Mammary epithelial cell (primary cell): ENCODE measurements at regions of chrX and their contacts with region 1.

Region 1: DNA sequence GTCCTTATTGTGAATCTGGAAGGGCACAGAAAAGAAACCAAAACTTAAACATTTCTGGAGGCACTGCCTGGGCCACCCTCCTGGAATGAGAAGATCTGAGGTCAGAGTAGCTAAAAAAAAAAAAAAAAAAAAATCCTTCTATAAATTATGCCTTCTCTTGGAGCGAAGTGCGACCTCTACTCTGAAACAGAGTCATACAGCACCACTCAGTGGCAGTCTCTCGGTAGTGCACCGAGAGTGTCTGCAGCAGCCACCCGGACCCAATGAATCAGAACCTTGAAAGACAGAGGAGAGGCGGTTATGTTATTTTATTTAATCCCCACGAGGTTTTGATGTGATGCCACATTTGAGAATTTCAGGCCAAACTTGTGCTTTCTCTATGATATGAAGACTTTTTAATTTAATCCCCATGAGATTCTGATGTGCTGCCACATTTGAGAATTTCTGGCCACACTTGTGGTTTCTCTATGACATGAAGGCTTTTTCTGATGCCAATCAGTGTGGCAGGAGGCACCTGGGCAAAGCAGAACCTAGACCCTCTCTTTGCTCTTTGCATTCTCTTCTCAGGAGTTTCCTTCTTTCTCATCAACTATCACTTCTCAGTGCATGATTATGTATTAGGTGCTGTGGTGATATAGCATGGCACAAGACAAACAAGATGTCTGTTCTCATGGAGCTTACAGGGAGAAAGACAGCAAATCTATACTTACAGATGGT is 5.6 kb upstream of the CT47C1 start:
- DNase-seq: peak; percentile 27
- H3K4me3 ChIP-seq: no peak overlapping the region
- H3K27ac ChIP-seq: no peak overlapping the region
- H3K4me1 ChIP-seq: no peaks in the 10 kb centered on the region
- H3K27me3 ChIP-seq: no peaks in the 10 kb centered on the region
- CTCF ChIP-seq: peak; percentile 59 to 68

Region 2: DNA sequence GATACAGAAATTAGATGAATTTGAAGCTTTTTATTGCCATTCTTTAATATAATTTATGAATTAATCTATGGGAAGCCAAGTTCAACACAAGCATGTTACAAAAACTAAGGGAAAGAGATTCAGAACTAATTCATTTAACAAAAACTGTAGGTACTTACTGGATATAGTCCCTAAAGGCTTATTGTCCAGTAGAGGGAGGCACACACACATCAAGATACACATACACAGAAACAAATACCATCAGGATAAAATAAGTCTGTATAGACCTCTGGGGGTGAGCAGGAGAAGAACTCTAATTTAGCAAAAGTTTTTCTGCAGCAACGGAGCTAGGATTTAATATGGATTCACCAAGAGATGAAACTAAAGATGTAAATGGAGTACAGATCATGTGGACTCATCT is 422.8 kb before region 1 on chrX:
- CTCF ChIA-PET with region 1: no interaction called
- dilution Hi-C with region 1: no loop called
- in situ Hi-C with region 1: no loop called
- intact Hi-C with region 1: loop called (anchors 5 kb)
- DNase-seq: peak; percentile 23
- H3K4me3 ChIP-seq: no peak overlapping the region
- H3K27ac ChIP-seq: no peak overlapping the region
- H3K4me1 ChIP-seq: no peaks in the 10 kb centered on the region
- H3K27me3 ChIP-seq: no peaks in the 10 kb centered on the region
- CTCF ChIP-seq: peak; percentile 21 to 57

Region 3: DNA sequence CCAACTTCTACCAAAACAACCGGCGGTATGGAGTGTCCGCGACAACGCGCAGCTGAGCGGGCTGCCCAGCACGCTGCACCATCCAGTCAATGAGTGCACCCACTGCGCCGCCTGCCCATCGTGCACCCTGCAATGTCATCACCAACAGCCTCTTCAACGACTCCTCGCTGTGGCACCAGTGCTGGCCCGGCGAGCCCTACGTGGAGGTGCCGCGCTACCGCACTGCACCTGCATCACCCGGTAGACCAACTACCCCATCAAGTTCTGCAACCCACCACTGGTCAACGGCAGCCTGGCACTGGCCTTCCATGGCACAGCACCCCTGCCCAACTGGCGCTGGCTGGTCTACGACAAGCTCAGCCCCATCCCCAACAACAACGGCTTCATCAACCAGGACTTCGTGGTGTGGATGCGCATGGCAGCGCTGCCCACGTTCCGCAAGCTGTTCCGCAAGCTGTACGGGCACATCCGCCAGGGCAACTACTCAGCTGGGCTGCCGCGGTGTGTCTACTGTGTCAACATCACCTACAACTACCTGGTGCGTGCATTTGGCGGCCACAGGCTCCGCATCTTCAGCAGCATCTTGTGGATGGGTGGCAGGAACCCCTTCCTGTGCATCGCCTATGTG is 296.9 kb before region 1 on chrX:
- CTCF ChIA-PET with region 1: no interaction called
- dilution Hi-C with region 1: no loop called
- in situ Hi-C with region 1: no loop called
- intact Hi-C with region 1: no loop called
- DNase-seq: no peak
- H3K4me3 ChIP-seq: no peak overlapping the region
- H3K27ac ChIP-seq: no peak overlapping the region
- H3K4me1 ChIP-seq: no peaks in the 10 kb centered on the region
- H3K27me3 ChIP-seq: no peaks in the 10 kb centered on the region
- CTCF ChIP-seq: no peak

Region 4: DNA sequence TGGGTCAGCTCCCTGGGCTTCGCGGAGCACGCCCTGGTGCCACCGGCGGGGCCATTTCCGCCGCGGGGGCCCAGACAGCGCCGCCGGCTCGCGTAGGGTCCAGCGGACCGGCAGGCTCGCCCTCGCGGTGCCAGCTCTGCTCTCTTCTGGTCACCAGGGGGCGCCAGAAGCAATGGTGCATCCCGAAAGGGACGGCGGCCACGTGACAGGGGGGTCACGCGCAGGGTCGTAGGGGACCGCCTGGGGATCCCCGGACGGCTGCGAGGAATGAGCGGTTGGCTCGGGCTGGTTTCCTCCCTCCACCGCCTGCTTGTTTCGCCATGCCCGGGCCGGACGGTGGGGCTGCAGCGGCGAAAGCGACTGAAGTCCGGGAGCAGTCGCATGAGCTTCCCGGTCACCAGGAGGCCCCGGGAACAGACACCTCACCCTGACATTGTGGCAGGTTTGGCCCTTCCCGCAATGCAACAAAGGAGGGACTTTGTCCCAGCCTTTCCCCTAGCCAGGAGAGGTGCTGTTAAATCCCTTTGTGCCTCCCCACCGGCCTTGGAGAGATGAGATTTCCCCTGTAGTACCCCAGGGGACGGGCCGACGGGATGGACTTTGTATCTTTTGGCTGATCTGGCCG is 227.7 kb before region 1 on chrX:
- CTCF ChIA-PET with region 1: interaction called, 8 read pairs
- dilution Hi-C with region 1: no loop called
- in situ Hi-C with region 1: no loop called
- intact Hi-C with region 1: loop called (anchors 2 kb)
- DNase-seq: peak; percentile 26
- H3K4me3 ChIP-seq: peak overlapping the region; percentile 21 to 50 (median 29)
- H3K27ac ChIP-seq: no peak overlapping the region
- H3K4me1 ChIP-seq: no peaks in the 10 kb centered on the region
- H3K27me3 ChIP-seq: no peaks in the 10 kb centered on the region
- CTCF ChIP-seq: peak; percentile 22 to 59

Region 5: DNA sequence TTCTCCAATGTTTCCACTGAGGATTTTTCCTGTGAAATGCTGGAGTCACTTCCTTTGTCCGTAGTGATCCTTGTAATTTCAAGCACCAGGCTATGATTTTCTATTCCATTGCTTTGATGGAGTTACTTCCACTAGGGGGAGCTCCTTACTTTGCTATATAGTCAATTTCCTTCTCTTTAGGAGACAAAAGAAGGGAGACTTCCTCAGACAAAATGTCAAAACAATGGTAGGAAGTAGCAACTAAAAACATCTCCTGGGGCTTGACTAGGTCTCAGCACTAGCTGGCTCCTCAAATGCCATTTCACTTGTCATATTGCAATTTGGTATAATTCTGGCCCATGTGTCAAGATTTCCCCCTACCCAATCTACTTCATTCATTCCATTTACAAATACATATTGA is 219.5 kb before region 1 on chrX:
- CTCF ChIA-PET with region 1: interaction called, 7 read pairs
- dilution Hi-C with region 1: no loop called
- in situ Hi-C with region 1: loop called in 1 of 2 experiments (anchors 10 kb)
- intact Hi-C with region 1: loop called (anchors 1 kb)
- DNase-seq: peak; percentile 42
- H3K4me3 ChIP-seq: no peak overlapping the region
- H3K27ac ChIP-seq: no peak overlapping the region
- H3K4me1 ChIP-seq: no peaks in the 10 kb centered on the region
- H3K27me3 ChIP-seq: peaks cover 2% of the 10 kb centered on the region
- CTCF ChIP-seq: peak; percentile 56 to 74

Region 6: DNA sequence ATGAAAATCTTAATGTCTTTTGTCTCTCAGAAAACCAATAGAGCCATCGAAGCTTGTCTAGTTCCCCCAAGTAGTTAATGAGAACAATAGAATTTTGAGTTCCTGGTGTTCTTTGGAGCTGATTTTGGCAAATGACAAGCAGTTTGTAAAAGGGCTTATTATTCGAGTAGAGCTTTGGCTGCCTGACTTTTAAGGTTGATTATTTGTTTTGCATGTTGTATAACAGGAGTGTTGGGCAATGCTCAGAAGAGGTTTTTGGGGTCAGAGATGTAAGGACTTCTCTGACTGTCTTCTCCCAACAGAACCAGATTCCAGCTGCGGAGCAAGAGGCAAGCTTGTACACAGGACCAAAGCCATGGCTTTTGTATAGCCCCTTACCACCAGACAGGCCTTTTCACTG is 213.6 kb before region 1 on chrX:
- CTCF ChIA-PET with region 1: no interaction called
- dilution Hi-C with region 1: no loop called
- in situ Hi-C with region 1: loop called in 1 of 2 experiments (anchors 10 kb)
- intact Hi-C with region 1: no loop called
- DNase-seq: no peak
- H3K4me3 ChIP-seq: no peak overlapping the region
- H3K27ac ChIP-seq: no peak overlapping the region
- H3K4me1 ChIP-seq: no peaks in the 10 kb centered on the region
- H3K27me3 ChIP-seq: peaks cover 5% of the 10 kb centered on the region
- CTCF ChIP-seq: no peak

Region 7: GRCh38 chrX:118978451-118978850 is 88.7 kb before region 1 on chrX:
- CTCF ChIA-PET with region 1: no interaction called
- dilution Hi-C with region 1: no loop called
- in situ Hi-C with region 1: no loop called
- intact Hi-C with region 1: no loop called
- DNase-seq: no peak
- H3K4me3 ChIP-seq: no peak overlapping the region
- H3K27ac ChIP-seq: no peak overlapping the region
- H3K4me1 ChIP-seq: peaks cover 19% of the 10 kb centered on the region
- H3K27me3 ChIP-seq: peaks cover 7% of the 10 kb centered on the region
- CTCF ChIP-seq: no peak

Region 8: DNA sequence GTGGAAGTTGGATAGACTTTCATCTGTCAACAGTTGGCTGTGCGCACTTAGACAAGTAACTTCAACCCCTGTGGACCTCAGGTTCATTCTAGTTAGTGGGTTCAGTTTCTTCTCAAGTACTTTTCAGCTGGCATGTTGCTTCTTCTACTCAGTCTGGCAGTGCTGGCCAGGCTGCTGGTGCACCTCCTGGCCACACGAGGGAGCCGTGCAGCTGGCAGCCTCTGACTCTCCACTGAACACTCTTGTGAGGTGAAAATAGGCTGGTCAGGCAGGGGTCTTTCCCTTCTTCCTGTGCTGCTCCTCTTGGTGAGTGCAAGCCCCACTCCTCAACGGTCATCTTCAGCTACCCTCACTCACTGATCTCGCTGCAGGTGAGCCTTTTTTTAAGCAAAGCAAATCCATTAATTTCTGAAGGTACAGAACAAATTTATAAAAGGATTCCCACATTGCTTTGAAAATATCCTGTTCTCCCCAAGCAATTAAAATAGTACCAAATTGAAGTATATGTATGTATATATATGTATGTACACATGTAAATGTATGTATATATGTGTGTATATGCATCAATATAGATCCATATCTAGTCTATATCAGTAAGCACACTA is 62.2 kb before region 1 on chrX:
- CTCF ChIA-PET with region 1: interaction called, 4 read pairs
- dilution Hi-C with region 1: no loop called
- in situ Hi-C with region 1: no loop called
- intact Hi-C with region 1: loop called (anchors 1 kb)
- DNase-seq: peak; percentile 14
- H3K4me3 ChIP-seq: no peak overlapping the region
- H3K27ac ChIP-seq: no peak overlapping the region
- H3K4me1 ChIP-seq: no peaks in the 10 kb centered on the region
- H3K27me3 ChIP-seq: no peaks in the 10 kb centered on the region
- CTCF ChIP-seq: peak; percentile 94 to 97

Region 9: GRCh38 chrX:119503484-119503911 is 436.3 kb after region 1 on chrX:
- CTCF ChIA-PET with region 1: interaction called, 10 read pairs
- dilution Hi-C with region 1: no loop called
- in situ Hi-C with region 1: no loop called
- intact Hi-C with region 1: no loop called
- DNase-seq: peak; percentile 68
- H3K4me3 ChIP-seq: no peak overlapping the region
- H3K27ac ChIP-seq: peak overlapping the region; percentile 59
- H3K4me1 ChIP-seq: peaks cover 25% of the 10 kb centered on the region
- H3K27me3 ChIP-seq: no peaks in the 10 kb centered on the region
- CTCF ChIP-seq: no peak